ENCODE measurements at regions of chr11 and their contacts with region 1.

Region 1: GRCh38 chr11:1109918-1110705 is 35.4 kb downstream of the MUC2 start:
- DNase-seq: peak; percentile 46 to 68
- ATAC-seq: no peak
- H3K4me3 ChIP-seq: no peak overlapping the region
- H3K27ac ChIP-seq: no peak overlapping the region
- H3K4me1 ChIP-seq: no peaks in the 10 kb centered on the region
- H3K27me3 ChIP-seq: no peaks in the 10 kb centered on the region

Region 2: DNA sequence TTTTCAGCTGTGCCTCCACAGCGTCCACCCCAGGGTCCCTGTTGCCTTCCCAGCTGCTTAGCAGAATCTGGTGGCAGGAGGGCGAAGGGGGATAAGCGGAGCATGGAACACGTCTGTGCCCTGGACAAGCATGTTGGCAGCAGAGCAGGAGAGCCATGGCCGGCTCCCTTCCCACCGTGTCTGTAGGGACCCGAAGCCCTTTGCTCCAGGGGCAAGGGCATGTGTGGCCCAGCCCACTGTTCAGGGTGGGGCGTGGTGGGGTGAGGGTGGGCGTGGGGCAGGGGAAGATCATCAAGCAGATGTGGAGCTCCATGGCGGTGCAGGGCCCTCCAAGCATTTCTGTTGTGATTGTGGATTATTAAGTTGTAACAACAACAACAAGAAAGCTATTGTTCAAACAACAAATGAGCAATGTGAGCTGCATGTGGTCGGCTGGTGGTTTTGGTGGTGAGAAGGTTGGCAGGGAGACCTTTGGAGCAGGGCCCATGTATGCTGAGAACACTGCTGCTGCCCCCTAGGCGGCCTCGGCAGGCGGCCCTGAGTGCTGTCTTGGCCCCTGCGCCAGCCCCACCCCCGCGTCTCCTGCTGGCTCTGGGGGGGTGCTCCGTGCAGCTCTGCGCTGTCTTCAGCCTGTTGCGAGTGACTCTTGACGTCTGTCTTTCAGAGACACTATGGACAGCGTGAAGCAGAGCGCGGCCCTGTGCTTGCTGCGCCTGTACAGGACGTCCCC is 133.5 kb before region 1 on chr11:
- intact Hi-C with region 1: no loop called
- DNase-seq: no peak
- ATAC-seq: no peak
- H3K4me3 ChIP-seq: no peak overlapping the region
- H3K27ac ChIP-seq: no peak overlapping the region
- H3K4me1 ChIP-seq: no peaks in the 10 kb centered on the region
- H3K27me3 ChIP-seq: no peaks in the 10 kb centered on the region

Region 3: DNA sequence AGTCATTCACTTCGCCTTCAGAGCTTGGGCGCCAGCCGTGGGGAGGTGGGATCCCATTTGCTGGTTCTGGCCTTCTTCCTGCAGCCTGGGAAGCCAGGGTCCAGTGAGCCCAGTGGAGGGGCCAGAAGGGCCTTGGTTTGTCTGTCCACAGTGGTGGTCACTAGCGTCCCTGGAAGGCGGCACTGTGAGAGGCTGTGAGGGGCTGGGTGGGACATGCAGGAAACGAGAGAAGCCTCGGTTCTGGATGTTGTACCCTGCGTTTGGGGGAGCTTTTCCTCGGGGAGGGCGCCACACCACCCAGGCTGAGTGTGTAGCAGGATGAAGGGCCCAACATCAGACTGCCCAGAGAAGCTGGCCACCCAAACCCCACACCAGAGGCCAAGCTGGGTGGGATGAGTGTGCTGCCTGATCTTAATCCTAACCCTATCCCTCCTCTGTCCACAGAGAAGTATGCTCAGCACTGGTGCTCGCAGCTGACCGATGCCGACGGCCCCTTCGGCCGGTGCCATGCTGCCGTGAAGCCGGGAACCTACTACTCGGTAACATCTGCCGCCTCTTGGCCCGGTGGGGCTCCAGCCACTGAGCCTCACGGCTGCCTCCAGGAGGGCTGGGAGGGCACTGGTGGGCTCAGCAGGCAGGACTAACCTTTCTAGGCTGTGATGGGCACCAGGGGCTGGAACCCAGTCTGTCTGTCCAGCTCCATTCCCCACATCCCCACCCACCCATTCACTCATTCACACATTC is 62.0 kb after region 1 on chr11:
- intact Hi-C with region 1: loop called in 1 of 2 experiments (anchors 10 kb)
- DNase-seq: no peak
- ATAC-seq: no peak
- H3K4me3 ChIP-seq: no peak overlapping the region
- H3K27ac ChIP-seq: no peak overlapping the region
- H3K4me1 ChIP-seq: no peaks in the 10 kb centered on the region
- H3K27me3 ChIP-seq: no peaks in the 10 kb centered on the region

Measured in aorta (tissue), 5 donors.